ENCODE measurements at regions of chr21 and their contacts with region 1.

Region 1: DNA sequence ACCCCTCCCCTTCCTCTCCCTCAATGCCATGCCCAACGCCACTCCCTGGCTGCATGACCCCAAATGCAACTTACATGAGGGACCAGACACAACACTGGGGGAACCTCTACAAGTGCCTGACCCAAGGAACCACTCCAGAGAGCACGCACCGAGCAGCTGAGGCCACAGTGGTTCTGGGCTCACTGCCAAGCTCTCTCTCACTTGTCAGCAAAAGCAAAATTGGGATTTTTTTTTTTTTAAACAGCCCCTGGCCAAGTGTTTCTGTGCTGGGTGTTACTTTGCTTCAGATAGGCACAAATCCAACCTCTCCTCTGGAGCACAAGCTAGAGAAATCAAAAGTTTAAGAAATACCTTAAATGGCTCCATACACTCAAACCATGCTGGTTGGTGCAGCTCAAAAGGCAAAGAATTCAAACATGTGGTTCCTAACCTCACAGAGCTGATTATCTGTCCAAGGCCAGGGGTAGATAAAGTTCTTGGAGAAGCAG is 363.0 kb downstream of the SETD4 start:
- DNase-seq: no peak
- ATAC-seq: no peak
- H3K4me3 ChIP-seq: no peak overlapping the region
- H3K27ac ChIP-seq: no peak overlapping the region
- H3K4me1 ChIP-seq: no peaks in the 10 kb centered on the region
- H3K27me3 ChIP-seq: no peaks in the 10 kb centered on the region
- CTCF ChIP-seq: no peak

Region 2: DNA sequence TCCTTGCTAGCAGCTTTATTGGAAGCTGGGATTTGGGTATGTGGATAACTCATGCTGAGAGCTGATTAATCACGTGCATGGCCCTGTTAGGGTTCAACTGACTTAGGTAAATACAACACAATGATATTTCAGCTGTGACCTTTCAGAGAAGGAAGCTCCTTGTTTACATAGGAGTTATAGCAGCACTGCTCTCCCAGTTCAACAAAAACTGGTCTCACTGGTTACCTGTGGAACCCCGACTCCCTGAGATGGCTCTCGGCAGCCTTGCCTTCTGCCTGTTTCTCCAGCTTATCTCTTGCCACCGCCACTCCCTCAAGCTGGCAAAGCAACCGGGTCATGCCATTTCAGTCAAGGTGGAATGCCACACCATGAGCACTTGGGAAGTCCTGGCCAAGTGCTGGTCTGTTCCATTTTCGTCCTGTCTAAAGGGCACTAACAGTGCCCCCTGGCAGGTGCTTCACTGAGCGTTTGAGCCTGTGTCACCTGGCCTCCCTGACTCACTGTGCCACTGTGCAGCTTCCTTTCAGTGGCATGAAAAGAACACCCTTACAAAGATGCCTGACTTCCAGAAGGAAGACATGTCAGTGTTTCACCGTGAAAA is 490.8 kb after region 1 on chr21:
- CTCF ChIA-PET with region 1: no interaction called
- POLR2A ChIA-PET with region 1: interaction called, 15 read pairs
- intact Hi-C with region 1: no loop called
- DNase-seq: peak; percentile 85
- ATAC-seq: peak; percentile 85
- H3K4me3 ChIP-seq: peak overlapping the region; percentile 50
- H3K27ac ChIP-seq: peak overlapping the region; percentile 72
- H3K4me1 ChIP-seq: peaks cover 24% of the 10 kb centered on the region
- H3K27me3 ChIP-seq: no peaks in the 10 kb centered on the region
- CTCF ChIP-seq: peak; percentile 56; the same call in 1 of the 2 replicates